ENCODE measurements at regions of chr6 and their contacts with region 1.

Region 1: DNA sequence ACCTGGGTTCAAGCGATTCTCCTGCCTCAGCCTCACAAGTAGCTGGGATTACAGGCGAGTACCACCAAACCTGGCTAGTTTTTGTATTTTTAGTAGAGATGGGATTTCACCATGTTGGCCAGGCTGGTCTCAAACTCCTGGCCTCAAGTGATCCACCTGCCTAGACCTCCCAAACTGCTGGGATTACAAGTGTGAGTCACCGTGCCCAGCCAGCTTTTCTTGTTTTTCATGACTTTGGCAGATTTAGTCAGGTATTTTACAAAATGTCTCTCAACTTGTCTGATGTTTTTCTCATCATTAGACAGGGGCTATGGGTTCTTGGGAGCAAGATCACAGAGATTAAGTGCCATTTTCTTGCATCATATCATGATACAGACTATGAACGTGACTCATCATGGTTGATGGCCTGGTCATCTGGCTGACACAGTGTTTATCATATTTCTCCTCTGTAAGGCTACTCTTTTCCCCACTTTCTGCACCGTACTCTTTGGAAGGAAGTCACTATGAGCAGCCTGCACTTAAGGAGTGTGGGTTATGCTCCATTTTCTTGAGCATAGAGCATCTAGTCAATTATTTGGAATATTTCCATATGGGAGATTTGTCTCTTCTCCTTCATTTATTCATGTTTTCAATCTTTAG is 67.8 kb downstream of the RNF182 start:
- DNase-seq: no peak
- H3K4me3 ChIP-seq: no peak overlapping the region
- CTCF ChIP-seq: no peak
- POLR2A ChIP-seq: no peak

Region 2: GRCh38 chr6:13953061-13953705 is 39.4 kb before region 1 on chr6:
- intact Hi-C with region 1: loop called (anchors 1 kb)
- DNase-seq: no peak
- H3K4me3 ChIP-seq: no peak overlapping the region
- CTCF ChIP-seq: no peak
- POLR2A ChIP-seq: no peak